Activated CD8-positive, alpha-beta memory T cell treated with anti-CD3 and anti-CD28 coated beads, Interleukin-2, amount 10 ng/mL, durations not matched to agents 7 days and 5 days (primary cell): ENCODE measurements at regions of chr19 and their contacts with region 1.

Region 1: GRCh38 chr19:19170053-19170872 is at the start of gene MEF2B:
- DNase-seq: peak; percentile 82
- ATAC-seq: peak; percentile 90
- H3K4me3 Mint-ChIP-seq: no peak within 1 kb of the TSS
- H3K27ac Mint-ChIP-seq: no peak within 1 kb of the TSS
- H3K4me1 Mint-ChIP-seq: peaks cover 12% of the 10 kb centered on the region
- H3K27me3 Mint-ChIP-seq: no peaks in the 10 kb centered on the region
- total RNA-seq, gene MEF2B: 3.2 to 7.2 TPM

Region 2: DNA sequence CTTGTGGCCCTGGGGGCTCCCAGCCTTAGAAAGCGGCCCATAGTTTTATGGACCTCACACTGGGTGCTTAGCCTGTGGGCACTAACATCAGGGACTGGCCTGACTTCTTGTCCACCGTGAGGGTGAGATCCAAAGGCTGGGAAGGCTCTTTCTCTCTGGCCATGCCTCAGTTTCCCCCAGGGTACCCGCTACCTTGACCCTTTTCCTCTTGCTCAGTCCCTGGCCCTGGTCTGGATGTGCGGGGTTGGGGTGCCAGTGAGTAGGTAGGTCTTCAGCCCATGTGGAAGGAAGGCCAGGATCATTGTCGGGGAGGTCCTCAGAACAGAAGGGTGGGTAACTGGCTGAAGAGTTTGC is 30.4 kb before region 1 on chr19:
- CTCF ChIA-PET with region 1: interaction called, 20 read pairs
- DNase-seq: no peak
- ATAC-seq: no peak
- H3K4me3 Mint-ChIP-seq: no peak overlapping the region
- H3K27ac Mint-ChIP-seq: no peak overlapping the region
- H3K4me1 Mint-ChIP-seq: peaks cover 23% of the 10 kb centered on the region
- H3K27me3 Mint-ChIP-seq: no peaks in the 10 kb centered on the region

Region 3: DNA sequence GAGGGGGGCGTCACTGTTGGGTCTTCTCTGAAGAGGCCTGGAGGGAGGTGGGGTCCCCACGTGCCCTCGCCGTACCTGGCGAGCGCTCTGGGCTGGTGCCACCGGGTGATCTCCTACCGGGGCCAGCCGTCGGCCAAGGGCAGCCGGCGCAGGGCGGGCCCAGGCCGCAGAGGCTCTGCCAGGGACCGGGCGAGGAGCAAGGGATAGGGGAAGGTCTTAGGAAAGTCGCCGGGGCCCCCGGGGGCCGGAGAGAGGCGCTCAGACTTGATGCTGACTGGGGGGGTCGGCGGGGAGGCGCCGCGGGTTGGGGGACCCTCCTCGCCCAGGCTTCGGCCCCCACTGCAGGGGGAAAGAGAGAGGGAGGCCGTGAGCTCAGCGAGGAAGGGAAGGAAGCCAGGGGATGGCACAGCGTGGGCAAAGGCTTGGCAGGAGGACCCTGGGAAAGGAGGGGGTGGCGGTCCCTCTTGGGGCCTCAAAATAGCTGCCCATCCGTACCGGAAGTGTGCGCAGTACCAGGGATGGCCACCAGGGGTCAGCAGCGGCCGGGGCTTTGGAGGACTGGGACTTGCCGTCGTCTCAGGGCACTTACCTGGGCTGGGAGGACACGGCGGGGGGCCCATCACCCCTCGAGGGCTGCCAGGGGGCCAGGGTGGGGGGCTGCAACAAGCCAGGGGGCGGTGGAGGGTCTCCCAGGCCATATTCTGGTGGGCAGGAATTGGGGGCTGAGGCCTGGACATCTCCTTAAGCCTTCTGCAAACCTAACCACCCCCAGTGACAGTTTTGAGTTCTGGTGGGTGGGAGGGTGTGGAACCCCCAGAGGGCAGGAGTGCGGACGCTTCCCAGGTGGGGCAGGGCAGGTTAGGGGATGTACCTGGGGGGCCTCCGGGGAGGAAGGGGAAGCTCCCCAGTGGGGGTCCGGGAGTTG is 24.3 kb before region 1 on chr19:
- CTCF ChIA-PET with region 1: interaction called, 20 read pairs
- DNase-seq: peak; percentile 90
- ATAC-seq: peak; percentile 83
- H3K4me3 Mint-ChIP-seq: no peak overlapping the region
- H3K27ac Mint-ChIP-seq: no peak overlapping the region
- H3K4me1 Mint-ChIP-seq: no peaks in the 10 kb centered on the region
- H3K27me3 Mint-ChIP-seq: no peaks in the 10 kb centered on the region

Region 4: GRCh38 chr19:19185853-19186740 is 15.8 kb after region 1 on chr19:
- CTCF ChIA-PET with region 1: interaction called, 16 read pairs
- DNase-seq: peak; percentile 72
- ATAC-seq: peak; percentile 89
- H3K4me3 Mint-ChIP-seq: no peak overlapping the region
- H3K27ac Mint-ChIP-seq: no peak overlapping the region
- H3K4me1 Mint-ChIP-seq: peaks cover 21% of the 10 kb centered on the region
- H3K27me3 Mint-ChIP-seq: no peaks in the 10 kb centered on the region

Region 5: GRCh38 chr19:19203012-19203856 is 33.0 kb after region 1 on chr19 and contains the start of gene NR2C2AP:
- CTCF ChIA-PET with region 1: interaction called, 11 read pairs
- DNase-seq: peak; percentile 95
- ATAC-seq: peak; percentile 95
- H3K4me3 Mint-ChIP-seq: peak within 1 kb of the TSS; percentile 93
- H3K27ac Mint-ChIP-seq: peak within 1 kb of the TSS; percentile 90
- H3K4me1 Mint-ChIP-seq: peaks cover 39% of the 10 kb centered on the region
- H3K27me3 Mint-ChIP-seq: no peaks in the 10 kb centered on the region
- total RNA-seq, gene NR2C2AP: 32.8 to 33.0 TPM

Region 6: DNA sequence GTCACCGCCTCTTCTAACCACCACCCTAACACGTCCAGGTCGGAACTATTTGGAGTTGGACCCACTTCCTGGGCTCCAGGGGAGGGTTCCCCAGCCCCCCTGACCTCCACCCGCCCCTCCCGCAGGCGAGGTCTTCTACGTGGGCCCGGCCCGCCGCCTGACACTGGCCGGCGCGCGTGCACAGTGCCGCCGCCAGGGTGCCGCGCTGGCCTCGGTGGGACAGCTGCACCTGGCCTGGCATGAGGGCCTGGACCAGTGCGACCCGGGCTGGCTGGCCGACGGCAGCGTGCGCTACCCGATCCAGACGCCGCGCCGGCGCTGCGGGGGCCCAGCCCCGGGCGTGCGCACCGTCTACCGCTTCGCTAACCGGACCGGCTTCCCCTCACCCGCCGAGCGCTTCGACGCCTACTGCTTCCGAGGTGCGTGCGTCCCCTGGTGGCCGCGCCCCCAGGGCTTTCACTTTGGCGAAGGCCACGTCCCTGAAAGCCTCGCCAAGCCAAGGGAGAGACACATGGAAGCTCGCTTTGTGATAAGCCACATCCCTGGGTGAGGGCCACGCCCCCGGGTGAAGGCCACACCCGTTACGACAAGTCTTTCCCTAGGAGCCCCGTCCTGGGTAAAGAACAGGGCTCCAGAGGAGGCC is 54.7 kb after region 1 on chr19:
- CTCF ChIA-PET with region 1: interaction called, 15 read pairs
- DNase-seq: peak; percentile 84
- ATAC-seq: peak; percentile 96
- H3K4me3 Mint-ChIP-seq: peak overlapping the region; percentile 55
- H3K27ac Mint-ChIP-seq: no peak overlapping the region
- H3K4me1 Mint-ChIP-seq: peaks cover 3% of the 10 kb centered on the region
- H3K27me3 Mint-ChIP-seq: peaks cover 20% of the 10 kb centered on the region